ENCODE measurements at regions of chr5 and their contacts with region 1.

Region 1: GRCh38 chr5:149035372-149035790 is 27.5 kb downstream of the SH3TC2 start:
- DNase-seq: peak; percentile 67
- H3K4me3 ChIP-seq: no peak overlapping the region; a peak in 1 of 4 replicates
- H3K27ac ChIP-seq: no peak overlapping the region
- H3K4me1 ChIP-seq: peaks cover 0 to 6% of the 10 kb centered on the region in 2 experiments; a peak in 2 of 4 replicates
- H3K27me3 ChIP-seq: no peaks in the 10 kb centered on the region
- CTCF ChIP-seq: peak; percentile 95
- EP300 ChIP-seq: no peak
- RAD21 ChIP-seq: peak; percentile 97

Region 2: DNA sequence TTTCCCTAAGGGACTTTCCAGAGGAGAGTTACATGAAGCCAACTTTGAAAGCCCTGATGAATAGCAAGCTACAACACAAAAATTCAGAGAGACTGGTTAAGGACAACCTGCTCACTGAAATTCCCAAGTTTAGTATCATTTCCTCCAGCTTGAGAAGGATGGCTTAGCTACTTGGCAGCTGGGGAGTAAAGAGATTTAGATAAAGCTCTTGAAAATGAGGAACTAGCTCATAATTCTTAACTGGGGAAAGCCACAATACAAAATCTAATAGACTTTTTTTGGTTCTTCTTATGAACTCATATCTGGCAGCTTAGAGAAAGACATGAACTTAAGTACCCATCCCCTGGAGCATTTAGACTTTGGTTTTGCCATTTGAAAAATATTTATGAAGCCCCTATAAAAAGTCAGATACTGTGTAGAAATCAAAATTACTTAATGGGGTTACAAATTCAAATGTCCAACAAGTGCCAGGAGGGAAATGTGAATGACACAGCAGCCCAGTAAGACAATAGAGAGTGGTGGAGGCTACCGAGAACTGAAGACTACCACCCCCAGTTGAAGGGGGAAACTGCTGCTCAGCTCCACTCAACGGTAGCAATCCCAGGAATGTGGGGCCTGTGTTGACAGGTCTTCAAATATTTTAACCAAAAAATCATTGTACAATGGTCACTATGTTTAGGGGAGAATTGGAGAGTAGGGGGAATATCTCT is 288.4 kb before region 1 on chr5:
- CTCF ChIA-PET with region 1: interaction called, 618 read pairs
- POLR2A ChIA-PET with region 1: no interaction called
- DNase-seq: no peak
- H3K4me3 ChIP-seq: no peak overlapping the region
- H3K27ac ChIP-seq: no peak overlapping the region
- H3K4me1 ChIP-seq: no peaks in the 10 kb centered on the region
- H3K27me3 ChIP-seq: no peaks in the 10 kb centered on the region
- CTCF ChIP-seq: no peak
- EP300 ChIP-seq: no peak
- RAD21 ChIP-seq: no peak

Region 3: GRCh38 chr5:148794729-148795561 is 240.4 kb before region 1 on chr5:
- CTCF ChIA-PET with region 1: no interaction called
- POLR2A ChIA-PET with region 1: no interaction called
- DNase-seq: no peak
- H3K4me3 ChIP-seq: no peak overlapping the region
- H3K27ac ChIP-seq: no peak overlapping the region
- H3K4me1 ChIP-seq: peaks cover 0 to 10% of the 10 kb centered on the region in 2 experiments; a peak in 3 of 4 replicates
- H3K27me3 ChIP-seq: no peaks in the 10 kb centered on the region
- CTCF ChIP-seq: no peak
- EP300 ChIP-seq: no peak
- RAD21 ChIP-seq: no peak

Region 4: GRCh38 chr5:148998174-148998797 is 37.1 kb before region 1 on chr5:
- CTCF ChIA-PET with region 1: interaction called, 21 read pairs
- POLR2A ChIA-PET with region 1: no interaction called
- DNase-seq: peak; percentile 38
- H3K4me3 ChIP-seq: no peak overlapping the region
- H3K27ac ChIP-seq: no peak overlapping the region
- H3K4me1 ChIP-seq: peaks cover 0 to 10% of the 10 kb centered on the region in 2 experiments; a peak in 3 of 4 replicates
- H3K27me3 ChIP-seq: no peaks in the 10 kb centered on the region
- CTCF ChIP-seq: peak; percentile 81
- EP300 ChIP-seq: no peak
- RAD21 ChIP-seq: peak; percentile 78

Region 5: DNA sequence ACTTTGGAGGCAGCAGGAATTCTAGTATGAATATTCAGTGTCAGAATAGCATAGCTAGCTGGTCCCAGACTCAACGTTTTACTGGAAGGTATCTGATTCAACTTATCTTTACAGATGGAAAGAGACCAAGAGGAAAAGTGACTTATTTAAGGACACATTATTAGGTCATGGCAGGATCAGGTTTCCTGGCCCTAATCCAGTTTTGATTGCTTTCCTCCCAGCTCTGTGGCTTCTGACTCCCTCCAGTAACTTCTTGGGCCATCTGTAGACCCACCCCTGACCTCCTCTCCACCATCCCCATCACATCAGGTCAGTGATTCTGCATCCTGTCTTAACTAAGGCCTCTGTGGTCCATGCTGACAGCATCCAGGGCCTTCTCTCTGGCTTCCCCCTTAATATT is 10.9 kb before region 1 on chr5:
- CTCF ChIA-PET with region 1: interaction called, 64 read pairs
- POLR2A ChIA-PET with region 1: no interaction called
- DNase-seq: no peak
- H3K4me3 ChIP-seq: no peak overlapping the region
- H3K27ac ChIP-seq: no peak overlapping the region
- H3K4me1 ChIP-seq: peaks cover 2 to 4% of the 10 kb centered on the region in 2 experiments; a peak in 3 of 4 replicates
- H3K27me3 ChIP-seq: no peaks in the 10 kb centered on the region
- CTCF ChIP-seq: no peak
- EP300 ChIP-seq: no peak; a peak in 1 of 4 replicates
- RAD21 ChIP-seq: no peak

Region 6: DNA sequence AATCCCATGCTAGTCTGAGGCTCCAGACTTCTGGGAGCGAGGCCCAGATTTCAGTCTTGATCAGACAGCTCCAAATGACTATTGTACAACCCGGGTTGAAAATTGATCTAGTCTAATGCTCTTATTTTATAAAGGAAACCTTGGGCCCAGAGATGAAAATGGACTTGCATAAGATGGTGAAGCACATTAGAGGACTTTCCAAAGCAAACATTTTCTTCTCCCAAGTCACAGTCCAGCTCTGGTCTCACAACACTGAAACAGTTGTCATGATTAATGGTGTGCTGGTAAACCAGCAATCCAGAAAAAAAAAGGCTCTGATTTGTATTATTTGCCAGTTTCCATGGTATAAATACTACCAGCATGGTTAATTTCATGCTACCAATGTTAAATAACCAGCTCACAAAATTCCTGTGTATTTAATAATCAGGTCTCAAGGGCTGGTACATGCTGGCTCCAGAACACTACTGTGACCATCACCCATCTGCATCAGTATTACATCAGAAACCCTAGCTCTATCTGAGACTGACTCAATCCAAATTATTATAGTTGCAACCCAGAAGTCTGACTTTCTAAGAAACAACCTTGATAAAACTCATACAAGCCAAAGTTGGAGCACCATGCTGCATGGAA is 73.4 kb after region 1 on chr5:
- CTCF ChIA-PET with region 1: interaction called, 82 read pairs
- POLR2A ChIA-PET with region 1: no interaction called
- DNase-seq: no peak
- H3K4me3 ChIP-seq: no peak overlapping the region
- H3K27ac ChIP-seq: no peak overlapping the region
- H3K4me1 ChIP-seq: no peaks in the 10 kb centered on the region
- H3K27me3 ChIP-seq: no peaks in the 10 kb centered on the region
- CTCF ChIP-seq: no peak
- EP300 ChIP-seq: no peak
- RAD21 ChIP-seq: no peak